Activated naive CD8-positive, alpha-beta T cell treated with anti-CD3 and anti-CD28 coated beads, Interleukin-2, amount 10 ng/mL, durations not matched to agents 7 days and 5 days (primary cell): ENCODE measurements at regions of chr2 and their contacts with region 1.

Region 1: DNA sequence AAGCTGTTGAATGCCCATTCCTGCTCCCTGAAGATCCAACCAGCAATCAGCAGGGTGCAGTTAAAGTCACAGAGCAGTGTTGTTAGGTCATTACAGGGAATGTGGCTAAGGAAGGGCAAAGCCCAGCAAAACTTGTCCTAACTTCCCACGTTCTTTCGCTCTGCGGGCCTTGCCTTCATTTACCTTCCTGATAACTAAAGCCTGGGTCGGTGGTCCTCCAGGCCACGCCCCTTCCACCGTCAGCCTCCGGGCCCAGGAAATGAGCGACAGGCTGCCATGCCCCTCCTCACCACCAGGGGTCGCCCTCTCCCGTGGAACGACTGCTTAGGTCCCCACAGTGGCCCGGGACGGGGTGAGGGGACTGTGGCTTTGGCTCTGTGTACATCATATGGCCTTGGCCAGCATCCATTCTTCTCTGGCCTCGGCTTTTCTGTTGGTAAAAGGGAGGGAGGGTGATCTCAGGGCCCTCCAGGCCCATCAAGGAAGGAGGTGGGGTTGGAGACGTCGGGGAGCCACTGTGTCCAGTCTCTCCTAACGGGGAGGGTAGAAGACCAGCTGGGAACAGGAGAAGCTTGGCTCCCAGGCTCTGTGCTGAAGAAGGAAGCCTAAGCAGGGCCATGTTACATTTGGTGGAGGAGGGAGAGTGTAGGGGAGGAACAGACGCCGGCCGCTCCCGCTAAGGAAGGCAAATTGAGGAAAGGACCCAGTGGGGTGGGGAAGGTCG is 2.2 kb downstream of the SH2D6 start:
- DNase-seq: peak; percentile 95
- ATAC-seq: peak; percentile 55
- H3K4me3 Mint-ChIP-seq: peak overlapping the region; percentile 73
- H3K27ac Mint-ChIP-seq: peak overlapping the region; percentile 87
- H3K4me1 Mint-ChIP-seq: peaks cover 26% of the 10 kb centered on the region
- H3K27me3 Mint-ChIP-seq: no peaks in the 10 kb centered on the region

Region 2: GRCh38 chr2:85327822-85328617 is 92.7 kb before region 1 on chr2 and contains the start of gene TGOLN2:
- POLR2A ChIA-PET with region 1: interaction called, 15 read pairs
- DNase-seq: peak; percentile 97
- ATAC-seq: peak; percentile 84
- H3K4me3 Mint-ChIP-seq: peak within 1 kb of the TSS; percentile 99
- H3K27ac Mint-ChIP-seq: peak within 1 kb of the TSS; percentile 100
- H3K4me1 Mint-ChIP-seq: peaks cover 25% of the 10 kb centered on the region
- H3K27me3 Mint-ChIP-seq: no peaks in the 10 kb centered on the region
- total RNA-seq, gene TGOLN2: 144 to 148 TPM

Region 3: GRCh38 chr2:85354286-85355072 is 66.2 kb before region 1 on chr2 and contains the starts of genes ELMOD3 and RETSAT:
- POLR2A ChIA-PET with region 1: interaction called, 13 read pairs
- DNase-seq: peak; percentile 90
- ATAC-seq: peak; percentile 100
- H3K4me3 Mint-ChIP-seq: peak within 1 kb of the TSS; percentile 92
- H3K27ac Mint-ChIP-seq: peak within 1 kb of the TSS; percentile 95
- H3K4me1 Mint-ChIP-seq: peaks cover 29% of the 10 kb centered on the region
- H3K27me3 Mint-ChIP-seq: no peaks in the 10 kb centered on the region
- total RNA-seq, gene ELMOD3: 23.1 to 26.4 TPM
- total RNA-seq, gene RETSAT: 28.8 to 29.7 TPM

Region 4: GRCh38 chr2:85409845-85410583 is 10.7 kb before region 1 on chr2 and contains the start of gene CAPG:
- POLR2A ChIA-PET with region 1: interaction called, 46 read pairs
- DNase-seq: peak; percentile 73
- ATAC-seq: peak; percentile 42
- H3K4me3 Mint-ChIP-seq: peak within 1 kb of the TSS; percentile 88
- H3K27ac Mint-ChIP-seq: peak within 1 kb of the TSS; percentile 82
- H3K4me1 Mint-ChIP-seq: peaks cover 60% of the 10 kb centered on the region
- H3K27me3 Mint-ChIP-seq: peaks cover 4% of the 10 kb centered on the region
- total RNA-seq, gene CAPG: 263 to 279 TPM

Region 5: GRCh38 chr2:85437488-85438284 is 17.0 kb after region 1 on chr2:
- POLR2A ChIA-PET with region 1: interaction called, 11 read pairs
- DNase-seq: peak; percentile 80
- ATAC-seq: peak; percentile 75
- H3K4me3 Mint-ChIP-seq: peak overlapping the region; percentile 84
- H3K27ac Mint-ChIP-seq: peak overlapping the region; percentile 93
- H3K4me1 Mint-ChIP-seq: peaks cover 33% of the 10 kb centered on the region
- H3K27me3 Mint-ChIP-seq: no peaks in the 10 kb centered on the region

Region 6: DNA sequence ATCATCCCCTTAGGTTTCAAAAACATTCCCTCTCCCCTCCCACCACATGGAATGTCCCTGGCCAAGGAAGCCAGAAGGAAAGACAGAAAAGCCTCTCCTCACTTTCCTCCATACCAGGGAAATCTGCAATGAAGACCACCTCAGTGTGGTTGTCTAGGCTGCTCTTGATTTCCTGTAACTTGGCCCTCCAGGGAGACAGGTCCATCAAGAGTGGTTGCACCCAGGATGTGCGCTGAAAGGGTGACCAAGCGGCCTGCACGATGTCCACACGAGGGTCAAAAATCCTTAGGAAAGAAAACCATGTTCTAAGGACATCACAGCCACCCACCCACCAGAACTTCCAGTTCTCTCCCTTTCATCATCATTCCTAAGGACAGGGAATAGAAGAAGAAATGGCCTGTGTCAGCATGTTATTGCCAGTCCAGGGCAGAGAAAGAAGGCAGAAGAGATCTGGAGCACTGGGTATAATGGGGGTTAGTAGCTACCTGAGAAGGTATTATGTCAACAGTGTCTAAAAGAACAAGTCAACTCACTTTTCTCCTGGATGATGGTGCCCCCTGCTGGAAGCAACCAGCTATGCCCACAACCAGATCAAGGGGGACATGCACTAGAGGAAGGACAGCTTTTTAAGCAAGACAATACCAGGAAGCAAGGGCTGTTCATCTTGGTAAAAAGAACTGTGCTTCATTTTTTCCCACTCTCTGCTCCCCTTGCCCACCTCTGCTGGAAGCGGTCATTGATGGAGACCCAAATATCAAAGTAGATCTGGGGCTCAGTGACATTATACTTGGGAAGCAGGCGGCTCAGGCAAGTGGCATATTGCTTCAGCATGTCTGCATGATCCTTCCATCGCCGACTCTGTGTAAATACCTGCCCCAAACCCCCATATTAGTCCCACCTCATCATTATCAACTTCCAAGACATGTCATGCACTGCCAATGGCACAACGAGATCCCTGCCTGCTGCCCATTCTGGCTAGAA is 131.3 kb after region 1 on chr2:
- POLR2A ChIA-PET with region 1: interaction called, 67 read pairs
- DNase-seq: peak; percentile 81
- ATAC-seq: peak; percentile 90
- H3K4me3 Mint-ChIP-seq: no peak overlapping the region
- H3K27ac Mint-ChIP-seq: peak overlapping the region; percentile 56
- H3K4me1 Mint-ChIP-seq: peaks cover 8% of the 10 kb centered on the region
- H3K27me3 Mint-ChIP-seq: no peaks in the 10 kb centered on the region

Region 7: GRCh38 chr2:85561317-85561979 is 140.8 kb after region 1 on chr2 and contains the start of gene GGCX:
- POLR2A ChIA-PET with region 1: interaction called, 15 read pairs
- DNase-seq: peak; percentile 89
- ATAC-seq: peak; percentile 95
- H3K4me3 Mint-ChIP-seq: peak within 1 kb of the TSS; percentile 97
- H3K27ac Mint-ChIP-seq: peak within 1 kb of the TSS; percentile 95
- H3K4me1 Mint-ChIP-seq: peaks cover 24% of the 10 kb centered on the region
- H3K27me3 Mint-ChIP-seq: no peaks in the 10 kb centered on the region
- total RNA-seq, gene GGCX: 24.8 to 26.8 TPM